B cell (primary cell): ENCODE measurements at regions of chr21 and their contacts with region 1.

Region 1: GRCh38 chr21:14773777-14774345 is 227.7 kb upstream of the SAMSN1 start:
- DNase-seq: peak; percentile 66
- ATAC-seq: peak; percentile 64
- H3K4me3 ChIP-seq: no peak overlapping the region
- H3K4me3 Mint-ChIP-seq: no peak overlapping the region
- H3K27ac ChIP-seq: no peak overlapping the region
- H3K27ac Mint-ChIP-seq: no peak overlapping the region
- H3K4me1 ChIP-seq: peaks cover 0 to 3% of the 10 kb centered on the region in 2 donors
- H3K4me1 Mint-ChIP-seq: peaks cover 17% of the 10 kb centered on the region
- H3K27me3 ChIP-seq: no peaks in the 10 kb centered on the region
- H3K27me3 Mint-ChIP-seq: no peaks in the 10 kb centered on the region
- CTCF ChIP-seq: peak; percentile 78

Region 2: DNA sequence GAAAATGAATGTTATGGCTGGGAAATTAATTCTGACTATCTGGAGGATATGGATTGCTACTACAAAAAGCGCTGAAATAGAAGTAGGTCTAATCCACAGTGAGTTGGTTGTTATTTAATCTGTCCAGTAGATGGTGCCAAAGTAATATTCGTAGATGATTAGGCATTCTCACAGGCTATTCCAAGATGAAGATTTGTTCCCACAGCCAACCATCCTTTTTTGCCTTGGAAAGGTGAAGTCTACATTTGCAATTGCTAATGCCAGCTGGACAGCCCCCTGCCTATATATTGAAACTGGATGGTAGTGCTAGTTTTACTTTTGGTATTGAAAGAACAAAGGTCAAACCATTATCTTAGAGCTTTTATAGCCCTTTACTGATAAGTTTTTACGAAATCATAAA is 514.1 kb before region 1 on chr21:
- CTCF ChIA-PET with region 1: interaction called, 5 read pairs
- POLR2A ChIA-PET with region 1: no interaction called
- intact Hi-C with region 1: loop called (anchors 1 kb)
- DNase-seq: peak; percentile 53
- ATAC-seq: peak; percentile 36
- H3K4me3 ChIP-seq: no peak overlapping the region
- H3K4me3 Mint-ChIP-seq: no peak overlapping the region
- H3K27ac ChIP-seq: no peak overlapping the region
- H3K27ac Mint-ChIP-seq: no peak overlapping the region
- H3K4me1 ChIP-seq: no peaks in the 10 kb centered on the region
- H3K4me1 Mint-ChIP-seq: no peaks in the 10 kb centered on the region
- H3K27me3 ChIP-seq: no peaks in the 10 kb centered on the region
- H3K27me3 Mint-ChIP-seq: no peaks in the 10 kb centered on the region
- CTCF ChIP-seq: peak; percentile 81

Region 3: DNA sequence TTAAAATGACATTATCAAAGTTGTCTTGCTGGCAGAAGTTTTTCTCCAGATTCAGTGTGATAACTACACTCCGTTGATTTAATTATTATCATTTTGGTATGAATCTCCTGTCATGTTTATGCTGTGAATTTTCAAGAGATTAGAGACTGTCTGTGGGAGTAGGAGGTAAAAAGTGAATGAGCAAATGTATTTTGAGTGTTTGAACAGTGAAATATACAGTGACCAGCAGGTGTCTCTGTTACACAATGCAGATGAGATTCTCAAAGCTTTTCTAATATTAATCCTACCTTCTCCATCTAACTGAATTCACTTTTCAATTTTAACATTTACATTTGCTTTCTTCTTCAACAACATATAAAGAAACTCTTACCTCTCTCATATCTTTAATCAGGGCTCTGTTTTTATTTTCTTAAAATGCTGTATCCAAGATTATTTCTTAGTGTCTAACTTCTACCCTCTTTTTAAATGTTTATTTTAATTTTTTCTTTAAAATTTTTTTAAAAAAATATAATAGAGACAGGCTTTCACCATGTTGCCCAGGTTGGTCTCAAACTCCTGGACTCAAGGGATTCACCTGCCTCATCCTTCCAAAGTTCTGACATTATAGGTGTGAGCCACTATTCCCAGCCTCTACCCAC is 370.1 kb before region 1 on chr21:
- CTCF ChIA-PET with region 1: interaction called, 11 read pairs
- POLR2A ChIA-PET with region 1: no interaction called
- intact Hi-C with region 1: loop called (anchors 1 kb)
- DNase-seq: peak; percentile 64
- ATAC-seq: peak; percentile 51
- H3K4me3 ChIP-seq: no peak overlapping the region
- H3K4me3 Mint-ChIP-seq: no peak overlapping the region
- H3K27ac ChIP-seq: no peak overlapping the region
- H3K27ac Mint-ChIP-seq: no peak overlapping the region
- H3K4me1 ChIP-seq: no peaks in the 10 kb centered on the region
- H3K4me1 Mint-ChIP-seq: peaks cover 1% of the 10 kb centered on the region
- H3K27me3 ChIP-seq: no peaks in the 10 kb centered on the region
- H3K27me3 Mint-ChIP-seq: no peaks in the 10 kb centered on the region
- CTCF ChIP-seq: peak; percentile 78